Stomach (tissue), 19 donors: ENCODE measurements at regions of chr2 and their contacts with region 1.

Region 1: DNA sequence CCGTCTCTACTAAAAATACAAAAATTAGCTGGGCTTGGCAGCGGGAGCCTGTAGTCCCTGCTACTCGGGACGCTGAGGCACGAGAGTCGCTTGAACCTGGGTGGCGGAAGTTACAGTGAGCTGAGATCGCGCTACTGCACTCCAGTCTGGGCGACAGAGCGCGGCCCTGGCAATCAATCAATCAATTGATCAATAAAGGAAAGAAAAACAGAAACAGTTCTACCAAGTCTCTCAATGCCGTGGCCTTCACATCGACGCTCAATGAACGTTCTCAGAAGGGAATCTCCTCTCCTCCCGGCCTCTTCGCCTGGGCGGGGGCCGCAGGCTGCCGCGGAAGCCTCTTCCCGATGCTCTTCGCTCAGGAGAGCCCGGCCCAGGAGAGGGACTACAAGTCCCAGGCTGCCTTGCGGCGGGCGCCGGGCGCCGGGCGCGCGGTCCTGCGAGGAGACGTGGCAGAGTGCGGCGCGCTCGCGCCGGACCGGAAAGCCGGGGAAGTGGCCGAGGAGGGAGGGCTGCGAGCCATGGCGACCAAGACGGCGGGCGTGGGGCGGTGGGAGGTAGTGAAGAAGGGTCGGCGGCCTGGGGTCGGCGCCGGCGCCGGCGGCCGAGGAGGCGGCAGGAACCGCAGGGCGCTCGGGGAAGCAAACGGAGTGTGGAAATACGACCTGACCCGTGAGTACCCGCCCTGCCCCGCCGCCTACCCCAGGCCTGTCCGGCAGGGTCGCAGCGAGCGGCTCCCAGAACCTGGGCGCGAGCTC is at the start of gene TMEM214:
- DNase-seq: peak; percentile 92 to 95
- H3K4me3 ChIP-seq: peak within 1 kb of the TSS; percentile 78 to 99 (median 88)
- H3K27ac ChIP-seq: peak within 1 kb of the TSS; percentile 85 to 96 (median 88)
- H3K4me1 ChIP-seq: peaks cover 9 to 40% (median 30%) of the 10 kb centered on the region in 4 donors
- H3K27me3 ChIP-seq: no peaks in the 10 kb centered on the region
- CTCF ChIP-seq: no peak
- EP300 ChIP-seq: no peak
- POLR2A ChIP-seq: peak in 1 of 4 donors; percentile 50
- total RNA-seq, gene TMEM214: 30.1 to 206 (median 89.5) TPM

Region 2: GRCh38 chr2:27086090-27086723 is 53.5 kb after region 1 on chr2:
- intact Hi-C with region 1: loop called (anchors 10 kb)
- DNase-seq: peak; percentile 97 to 99
- H3K4me3 ChIP-seq: peak overlapping the region; percentile 63 to 79 (median 65)
- H3K27ac ChIP-seq: peak overlapping the region; percentile 83 to 92 (median 89)
- H3K4me1 ChIP-seq: peaks cover 33 to 70% (median 56%) of the 10 kb centered on the region in 4 donors
- H3K27me3 ChIP-seq: no peaks in the 10 kb centered on the region
- CTCF ChIP-seq: peak in 5 of 7 experiments; percentile 72 to 99 (median 94)
- EP300 ChIP-seq: no peak
- POLR2A ChIP-seq: no peak

Region 3: DNA sequence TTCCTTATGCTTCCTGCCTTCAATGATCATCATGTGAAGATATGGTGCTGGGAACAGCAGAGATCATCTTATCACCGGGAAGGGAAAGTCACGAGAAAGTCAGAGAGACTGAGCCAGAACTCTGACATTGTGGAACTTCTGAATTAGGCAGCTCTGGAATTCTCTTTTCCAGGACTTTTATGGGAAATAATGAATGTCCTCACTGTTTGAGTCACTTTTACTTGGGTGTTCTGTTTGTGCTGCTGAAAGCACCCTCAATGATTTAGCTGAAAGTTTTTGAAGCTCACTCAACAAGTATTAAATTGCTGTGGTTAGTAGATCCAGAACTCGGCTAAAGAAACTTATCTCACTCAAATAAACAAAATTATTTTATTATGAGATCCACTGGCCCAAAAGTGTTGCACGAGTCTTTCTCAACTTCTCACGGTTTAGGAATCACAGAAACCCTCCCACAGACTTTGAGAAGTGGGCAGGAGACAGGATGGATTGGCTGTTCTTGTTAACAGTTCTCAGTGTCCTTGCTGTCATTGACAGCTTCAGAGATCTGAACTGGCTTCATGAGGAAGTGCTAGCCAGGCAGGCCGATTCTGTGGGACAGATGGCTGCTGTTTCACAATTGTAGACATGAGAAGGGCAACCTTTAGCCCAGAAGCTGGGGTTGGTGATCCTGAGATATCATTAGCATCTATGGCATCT is 152.8 kb after region 1 on chr2:
- intact Hi-C with region 1: no loop called
- DNase-seq: peak in 1 of 2 donors; percentile 41
- H3K4me3 ChIP-seq: no peak overlapping the region
- H3K27ac ChIP-seq: peak overlapping the region; percentile 25 to 85 (median 73)
- H3K4me1 ChIP-seq: peaks cover 0 to 5% (median 0%) of the 10 kb centered on the region in 4 donors
- H3K27me3 ChIP-seq: peaks cover 0 to 11% (median 0%) of the 10 kb centered on the region in 3 donors
- CTCF ChIP-seq: no peak
- EP300 ChIP-seq: no peak
- POLR2A ChIP-seq: no peak